ENCODE measurements at regions of chr6 and their contacts with region 1.

Region 1: GRCh38 chr6:68967549-68968300 is 332.6 kb downstream of the ADGRB3 start:
- DNase-seq: peak; percentile 52
- ATAC-seq: peak; percentile 60; the same call in 1 of the 2 replicates
- H3K4me3 ChIP-seq: no peak overlapping the region
- H3K27ac ChIP-seq: no peak overlapping the region
- H3K4me1 ChIP-seq: no peaks in the 10 kb centered on the region
- H3K27me3 ChIP-seq: no peaks in the 10 kb centered on the region; the same call in none of the 2 replicates
- CTCF ChIP-seq: peak; percentile 96

Region 2: GRCh38 chr6:68639826-68640490 is 327.8 kb before region 1 on chr6:
- CTCF ChIA-PET with region 1: no interaction called
- POLR2A ChIA-PET with region 1: no interaction called
- in situ Hi-C with region 1: no loop called
- intact Hi-C with region 1: loop called (anchors 5 kb)
- DNase-seq: no peak
- ATAC-seq: no peak
- H3K4me3 ChIP-seq: peak overlapping the region; percentile 7 to 35; a peak in 3 of 4 replicates
- H3K27ac ChIP-seq: no peak overlapping the region
- H3K4me1 ChIP-seq: peaks cover 14% of the 10 kb centered on the region
- H3K27me3 ChIP-seq: peaks cover 30% of the 10 kb centered on the region
- CTCF ChIP-seq: no peak

Measured in Panc1 (cell line).